ENCODE measurements at regions of chr6 and their contacts with region 1.

Region 1: GRCh38 chr6:27078734-27079357 is 168.7 kb upstream of the PRSS16 start:
- DNase-seq: peak; percentile 65
- ATAC-seq: peak; percentile 57
- H3K4me3 ChIP-seq: peak overlapping the region in 3 of 5 experiments; percentile 37 to 56 (median 41)
- H3K4me3 Mint-ChIP-seq: peak overlapping the region; percentile 78
- H3K27ac ChIP-seq: no peak overlapping the region
- H3K27ac Mint-ChIP-seq: no peak overlapping the region
- H3K4me1 ChIP-seq: peaks cover 4% of the 10 kb centered on the region in 2 donors
- H3K4me1 Mint-ChIP-seq: peaks cover 3% of the 10 kb centered on the region
- H3K27me3 ChIP-seq: peaks cover 0 to 21% (median 8%) of the 10 kb centered on the region in 4 experiments
- H3K27me3 Mint-ChIP-seq: peaks cover 71% of the 10 kb centered on the region
- CTCF ChIP-seq: peak; percentile 69

Region 2: DNA sequence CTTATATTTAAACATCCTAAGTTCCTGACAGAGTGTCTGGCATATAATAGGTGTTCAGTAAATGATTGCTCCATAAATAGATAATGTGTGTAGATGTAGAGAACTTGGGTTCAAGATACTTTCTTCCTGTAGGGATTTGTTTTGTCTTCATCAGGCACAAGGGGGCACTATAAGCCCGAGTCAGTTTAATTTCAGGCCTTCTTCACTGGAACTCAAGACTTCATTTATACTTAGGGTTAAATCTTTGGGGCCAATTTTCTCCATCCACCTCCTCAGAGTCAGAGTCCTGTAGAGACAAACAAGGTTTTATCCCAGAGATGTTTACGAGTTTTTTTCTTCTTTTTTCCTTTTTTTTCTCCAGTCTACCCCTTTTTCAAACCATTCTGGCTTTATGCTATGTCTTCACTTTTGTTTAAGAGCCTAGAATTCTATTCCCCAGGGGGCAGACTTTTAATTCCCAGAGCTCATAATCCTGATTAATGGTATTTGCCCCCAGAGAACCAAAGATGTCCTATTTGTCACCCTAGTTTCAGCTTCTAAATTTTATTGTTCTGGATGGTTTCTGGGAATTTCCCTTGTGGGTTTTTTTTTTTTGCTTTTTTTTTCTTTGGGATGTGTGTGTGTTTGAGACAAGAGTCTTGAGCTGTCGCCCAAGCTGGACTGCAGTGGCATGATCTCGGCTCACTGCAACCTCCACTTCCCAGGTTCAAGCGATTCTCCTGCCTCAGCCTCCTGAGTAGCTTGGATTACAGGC is 903.2 kb before region 1 on chr6:
- CTCF ChIA-PET with region 1: interaction called, 3 read pairs
- POLR2A ChIA-PET with region 1: no interaction called
- intact Hi-C with region 1: loop called (anchors 10 kb)
- DNase-seq: peak; percentile 81
- ATAC-seq: no peak
- H3K4me3 ChIP-seq: no peak overlapping the region
- H3K4me3 Mint-ChIP-seq: peak overlapping the region; percentile 21
- H3K27ac ChIP-seq: no peak overlapping the region
- H3K27ac Mint-ChIP-seq: peak overlapping the region; percentile 85
- H3K4me1 ChIP-seq: peaks cover 21 to 26% of the 10 kb centered on the region in 2 donors
- H3K4me1 Mint-ChIP-seq: peaks cover 29% of the 10 kb centered on the region
- H3K27me3 ChIP-seq: no peaks in the 10 kb centered on the region
- H3K27me3 Mint-ChIP-seq: no peaks in the 10 kb centered on the region
- CTCF ChIP-seq: peak; percentile 93

Region 3: GRCh38 chr6:26342106-26343004 is 736.5 kb before region 1 on chr6:
- CTCF ChIA-PET with region 1: interaction called, 5 read pairs
- POLR2A ChIA-PET with region 1: no interaction called
- intact Hi-C with region 1: loop called (anchors 5 kb)
- DNase-seq: no peak
- ATAC-seq: peak; percentile 9
- H3K4me3 ChIP-seq: peak overlapping the region in 1 of 5 experiments; percentile 19
- H3K4me3 Mint-ChIP-seq: peak overlapping the region; percentile 52
- H3K27ac ChIP-seq: no peak overlapping the region
- H3K27ac Mint-ChIP-seq: no peak overlapping the region
- H3K4me1 ChIP-seq: peaks cover 9 to 13% of the 10 kb centered on the region in 2 donors
- H3K4me1 Mint-ChIP-seq: peaks cover 8% of the 10 kb centered on the region
- H3K27me3 ChIP-seq: peaks cover 0 to 33% (median 25%) of the 10 kb centered on the region in 4 experiments
- H3K27me3 Mint-ChIP-seq: peaks cover 47% of the 10 kb centered on the region
- CTCF ChIP-seq: no peak

Region 4: GRCh38 chr6:26607434-26608230 is 471.2 kb before region 1 on chr6:
- CTCF ChIA-PET with region 1: interaction called, 12 read pairs
- POLR2A ChIA-PET with region 1: no interaction called
- intact Hi-C with region 1: no loop called
- DNase-seq: peak; percentile 71
- ATAC-seq: peak; percentile 77
- H3K4me3 ChIP-seq: no peak overlapping the region
- H3K4me3 Mint-ChIP-seq: peak overlapping the region; percentile 16
- H3K27ac ChIP-seq: no peak overlapping the region
- H3K27ac Mint-ChIP-seq: no peak overlapping the region
- H3K4me1 ChIP-seq: peaks cover 0 to 3% of the 10 kb centered on the region in 2 donors
- H3K4me1 Mint-ChIP-seq: peaks cover 7% of the 10 kb centered on the region
- H3K27me3 ChIP-seq: peaks cover 0 to 10% (median 2%) of the 10 kb centered on the region in 4 experiments
- H3K27me3 Mint-ChIP-seq: peaks cover 10% of the 10 kb centered on the region
- CTCF ChIP-seq: peak; percentile 74

Region 5: GRCh38 chr6:27280064-27280539 is 201.3 kb after region 1 on chr6:
- CTCF ChIA-PET with region 1: no interaction called
- POLR2A ChIA-PET with region 1: no interaction called
- intact Hi-C with region 1: no loop called
- DNase-seq: no peak
- ATAC-seq: no peak
- H3K4me3 ChIP-seq: no peak overlapping the region
- H3K4me3 Mint-ChIP-seq: no peak overlapping the region
- H3K27ac ChIP-seq: no peak overlapping the region
- H3K27ac Mint-ChIP-seq: no peak overlapping the region
- H3K4me1 ChIP-seq: peaks cover 8 to 14% of the 10 kb centered on the region in 2 donors
- H3K4me1 Mint-ChIP-seq: no peaks in the 10 kb centered on the region
- H3K27me3 ChIP-seq: peaks cover 0 to 87% (median 73%) of the 10 kb centered on the region in 4 experiments
- H3K27me3 Mint-ChIP-seq: peaks cover 72% of the 10 kb centered on the region
- CTCF ChIP-seq: no peak